PC-9 (cell line): ENCODE measurements at regions of chr4 and their contacts with region 1.

Region 1: DNA sequence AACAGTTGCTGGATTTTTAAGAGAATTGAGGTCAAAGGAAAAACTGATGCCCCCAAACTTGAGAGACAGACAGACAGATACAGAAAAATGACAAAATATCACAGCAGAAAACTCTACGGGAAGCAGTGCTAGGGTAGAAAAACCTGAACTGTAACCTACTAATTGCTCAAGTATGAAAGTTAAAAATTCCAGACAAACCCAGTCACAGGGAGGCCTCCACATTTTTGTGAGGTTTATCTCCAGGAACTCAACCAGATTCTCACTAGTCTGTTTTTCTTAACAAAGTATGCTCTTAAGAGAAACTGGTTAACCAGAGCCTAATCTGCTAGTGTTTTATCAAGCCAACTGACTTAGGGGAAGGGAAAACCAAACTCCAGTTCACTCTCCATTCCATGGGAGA is 19.9 kb upstream of the PPP3CA start:
- DNase-seq: peak; percentile 28 to 86
- H3K4me3 ChIP-seq: no peak overlapping the region
- H3K27ac ChIP-seq: peak overlapping the region; percentile 95
- H3K4me1 ChIP-seq: peaks cover 20% of the 10 kb centered on the region
- H3K27me3 ChIP-seq: no peaks in the 10 kb centered on the region
- CTCF ChIP-seq: no peak

Region 2: GRCh38 chr4:101356928-101357327 is 10.3 kb before region 1 on chr4:
- CTCF ChIA-PET with region 1: no interaction called
- POLR2A ChIA-PET with region 1: interaction called, 12 read pairs
- intact Hi-C with region 1: no loop called
- DNase-seq: peak; percentile 68 to 90
- H3K4me3 ChIP-seq: no peak overlapping the region
- H3K27ac ChIP-seq: peak overlapping the region; percentile 96
- H3K4me1 ChIP-seq: peaks cover 33% of the 10 kb centered on the region
- H3K27me3 ChIP-seq: no peaks in the 10 kb centered on the region
- CTCF ChIP-seq: no peak

Region 3: DNA sequence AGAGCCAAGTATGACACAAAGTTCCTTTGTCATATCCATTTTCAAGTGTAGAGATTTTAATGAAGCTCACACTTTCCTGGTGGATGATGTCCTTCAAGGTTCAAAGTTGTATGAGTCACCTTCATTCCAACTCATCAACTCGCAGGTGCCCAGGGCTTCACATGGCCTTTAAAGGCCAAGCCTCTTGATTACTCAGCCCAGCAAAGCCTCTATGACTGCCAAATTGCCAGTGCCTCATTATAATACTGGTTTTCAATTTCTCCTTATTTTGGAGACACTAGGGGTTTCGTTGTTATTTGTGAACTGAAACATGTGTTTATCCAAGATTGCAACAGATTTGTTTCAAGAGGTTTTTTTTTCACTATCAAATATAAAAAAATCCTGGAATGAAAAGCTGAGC is 26.0 kb after region 1 on chr4:
- CTCF ChIA-PET with region 1: no interaction called
- POLR2A ChIA-PET with region 1: no interaction called
- intact Hi-C with region 1: loop called (anchors 1 kb)
- DNase-seq: peak; percentile 38 to 72
- H3K4me3 ChIP-seq: no peak overlapping the region
- H3K27ac ChIP-seq: no peak overlapping the region
- H3K4me1 ChIP-seq: peaks cover 4% of the 10 kb centered on the region; the same call in 1 of the 2 replicates
- H3K27me3 ChIP-seq: no peaks in the 10 kb centered on the region
- CTCF ChIP-seq: no peak

Region 4: GRCh38 chr4:101419324-101420135 is 52.3 kb after region 1 on chr4:
- CTCF ChIA-PET with region 1: no interaction called
- POLR2A ChIA-PET with region 1: no interaction called
- intact Hi-C with region 1: loop called (anchors 5 kb)
- DNase-seq: no peak
- H3K4me3 ChIP-seq: no peak overlapping the region
- H3K27ac ChIP-seq: no peak overlapping the region
- H3K4me1 ChIP-seq: no peaks in the 10 kb centered on the region; the same call in 1 of the 2 replicates
- H3K27me3 ChIP-seq: no peaks in the 10 kb centered on the region
- CTCF ChIP-seq: no peak